Caco-2 (cell line): ENCODE measurements at regions of chrX and their contacts with region 1.

Region 1: GRCh38 chrX:35809781-35810180 is 11.6 kb downstream of the MAGEB16 start:
- DNase-seq: peak; percentile 36 to 57
- H3K4me3 ChIP-seq: no peak overlapping the region
- H3K4me3 Mint-ChIP-seq: no peak overlapping the region
- H3K27ac Mint-ChIP-seq: peak overlapping the region; percentile 83
- H3K4me1 ChIP-seq: peaks cover 35% of the 10 kb centered on the region
- H3K4me1 Mint-ChIP-seq: peaks cover 11% of the 10 kb centered on the region
- H3K27me3 ChIP-seq: no peaks in the 10 kb centered on the region
- H3K27me3 Mint-ChIP-seq: no peaks in the 10 kb centered on the region
- CTCF ChIP-seq: no peak

Region 2: DNA sequence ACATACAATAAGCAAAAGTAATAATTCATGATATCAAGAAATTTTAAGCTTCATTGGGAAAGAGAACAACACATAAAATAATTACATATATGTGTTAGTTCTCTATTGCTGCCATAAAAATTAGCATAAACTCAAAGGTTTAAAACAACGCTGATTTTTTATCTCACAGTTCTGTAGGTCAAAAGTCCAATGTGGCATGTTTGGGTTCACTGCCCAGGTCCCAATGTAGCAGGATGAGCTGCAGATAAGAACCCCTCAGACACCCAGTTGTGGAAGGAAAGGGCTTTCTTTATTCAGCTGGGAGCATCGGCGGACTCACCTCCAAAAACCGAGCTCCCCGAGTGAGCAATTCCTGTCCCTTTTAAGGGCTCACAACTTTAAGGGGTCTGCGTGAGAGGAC is 24.7 kb before region 1 on chrX:
- CTCF ChIA-PET with region 1: no interaction called
- POLR2A ChIA-PET with region 1: no interaction called
- intact Hi-C with region 1: loop called (anchors 1 kb)
- DNase-seq: no peak
- H3K4me3 ChIP-seq: no peak overlapping the region
- H3K4me3 Mint-ChIP-seq: peak overlapping the region; percentile 66
- H3K27ac Mint-ChIP-seq: peak overlapping the region; percentile 63
- H3K4me1 ChIP-seq: peaks cover 30% of the 10 kb centered on the region
- H3K4me1 Mint-ChIP-seq: no peaks in the 10 kb centered on the region
- H3K27me3 ChIP-seq: no peaks in the 10 kb centered on the region
- H3K27me3 Mint-ChIP-seq: no peaks in the 10 kb centered on the region
- CTCF ChIP-seq: no peak

Region 3: GRCh38 chrX:35868501-35868900 is 58.7 kb after region 1 on chrX:
- CTCF ChIA-PET with region 1: no interaction called
- POLR2A ChIA-PET with region 1: no interaction called
- intact Hi-C with region 1: loop called (anchors 5 kb)
- DNase-seq: no peak
- H3K4me3 ChIP-seq: no peak overlapping the region
- H3K4me3 Mint-ChIP-seq: no peak overlapping the region
- H3K27ac Mint-ChIP-seq: no peak overlapping the region
- H3K4me1 ChIP-seq: no peaks in the 10 kb centered on the region
- H3K4me1 Mint-ChIP-seq: peaks cover 5% of the 10 kb centered on the region
- H3K27me3 ChIP-seq: no peaks in the 10 kb centered on the region
- H3K27me3 Mint-ChIP-seq: no peaks in the 10 kb centered on the region
- CTCF ChIP-seq: no peak